ENCODE measurements at regions of chr9 and their contacts with region 1.

Region 1: DNA sequence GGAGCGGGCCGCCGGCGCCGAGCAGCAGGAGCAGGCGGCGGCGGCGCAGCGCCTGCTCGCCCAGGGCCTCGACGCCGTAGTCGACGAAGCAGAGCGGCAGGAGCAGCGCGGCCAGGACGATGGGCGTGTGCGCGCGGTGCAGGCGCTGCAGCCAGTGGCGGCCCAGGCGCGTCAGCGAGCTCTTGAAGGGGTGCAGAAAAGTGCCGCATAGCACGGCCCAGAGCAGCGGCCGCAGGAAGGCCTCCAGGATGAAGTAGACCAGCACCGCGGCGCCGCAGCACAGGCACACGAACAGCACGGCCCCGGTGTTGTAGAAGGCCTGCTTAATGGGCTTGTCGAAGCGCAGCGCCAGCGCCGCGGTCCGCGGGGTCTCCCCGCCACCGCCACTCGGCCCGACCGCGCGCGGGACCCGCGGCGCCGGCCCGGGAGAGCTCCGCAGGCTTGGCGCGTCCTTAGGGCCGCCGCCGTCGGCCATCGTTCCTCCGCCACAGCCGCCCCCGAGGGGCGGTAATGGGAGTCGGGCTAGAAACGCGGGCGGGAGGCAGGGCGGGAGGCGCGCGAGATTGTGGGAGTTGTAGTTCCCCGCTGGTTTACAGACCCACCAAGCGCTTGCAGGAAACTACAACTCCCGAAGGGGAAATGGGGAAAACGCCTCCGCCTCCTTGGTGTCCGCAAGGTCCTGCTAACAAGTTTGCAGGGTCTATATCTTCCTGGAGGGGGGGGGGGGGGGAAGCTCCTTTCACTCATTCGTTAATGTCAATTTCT is at the start of gene TMEM245:
- DNase-seq: peak; percentile 96
- H3K4me3 Mint-ChIP-seq: peak within 1 kb of the TSS; percentile 84
- H3K27ac Mint-ChIP-seq: peak within 1 kb of the TSS; percentile 84
- H3K4me1 Mint-ChIP-seq: peaks cover 43% of the 10 kb centered on the region
- H3K27me3 Mint-ChIP-seq: no peaks in the 10 kb centered on the region
- total RNA-seq, gene TMEM245: 33.3 TPM

Region 2: DNA sequence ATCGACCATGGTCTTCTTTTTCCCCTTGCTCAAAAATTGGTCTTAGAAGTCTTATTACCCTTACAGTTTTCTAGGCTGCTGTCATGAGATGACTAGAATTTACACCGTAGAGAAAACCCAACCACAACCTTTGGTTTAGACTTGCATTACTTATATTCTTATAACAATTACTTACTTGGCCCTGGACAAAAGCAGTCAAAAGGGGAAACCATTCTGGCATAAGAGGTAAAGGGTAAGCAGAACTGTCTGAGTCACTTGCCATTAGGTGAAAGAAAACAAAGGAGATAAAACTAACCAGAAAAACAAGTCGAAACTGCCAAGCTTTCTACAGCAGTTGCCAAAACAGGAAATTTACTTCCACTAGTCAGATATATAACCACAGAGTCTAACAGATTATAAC is 17.8 kb before region 1 on chr9:
- CTCF ChIA-PET with region 1: interaction called, 4 read pairs
- POLR2A ChIA-PET with region 1: interaction called, 18 read pairs
- DNase-seq: no peak
- H3K4me3 Mint-ChIP-seq: peak overlapping the region; percentile 60
- H3K27ac Mint-ChIP-seq: peak overlapping the region; percentile 88
- H3K4me1 Mint-ChIP-seq: peaks cover 62% of the 10 kb centered on the region
- H3K27me3 Mint-ChIP-seq: no peaks in the 10 kb centered on the region

Measured in activated CD4-positive, alpha-beta memory T cell treated with anti-CD3 and anti-CD28 coated beads, Interleukin-2, amount 10 ng/mL, durations not matched to agents 7 days and 5 days (primary cell).